Aorta (tissue), 5 donors: ENCODE measurements at regions of chr1 and their contacts with region 1.

Region 1: GRCh38 chr1:180631766-180632325 is at the start of gene XPR1:
- DNase-seq: peak; percentile 98 to 99
- ATAC-seq: peak; percentile 99
- H3K4me3 ChIP-seq: peak within 1 kb of the TSS; percentile 73 to 91
- H3K27ac ChIP-seq: peak within 1 kb of the TSS; percentile 31 to 60
- H3K4me1 ChIP-seq: no peaks in the 10 kb centered on the region
- H3K27me3 ChIP-seq: no peaks in the 10 kb centered on the region
- total RNA-seq, gene XPR1: 23.8 to 55.4 TPM

Region 2: DNA sequence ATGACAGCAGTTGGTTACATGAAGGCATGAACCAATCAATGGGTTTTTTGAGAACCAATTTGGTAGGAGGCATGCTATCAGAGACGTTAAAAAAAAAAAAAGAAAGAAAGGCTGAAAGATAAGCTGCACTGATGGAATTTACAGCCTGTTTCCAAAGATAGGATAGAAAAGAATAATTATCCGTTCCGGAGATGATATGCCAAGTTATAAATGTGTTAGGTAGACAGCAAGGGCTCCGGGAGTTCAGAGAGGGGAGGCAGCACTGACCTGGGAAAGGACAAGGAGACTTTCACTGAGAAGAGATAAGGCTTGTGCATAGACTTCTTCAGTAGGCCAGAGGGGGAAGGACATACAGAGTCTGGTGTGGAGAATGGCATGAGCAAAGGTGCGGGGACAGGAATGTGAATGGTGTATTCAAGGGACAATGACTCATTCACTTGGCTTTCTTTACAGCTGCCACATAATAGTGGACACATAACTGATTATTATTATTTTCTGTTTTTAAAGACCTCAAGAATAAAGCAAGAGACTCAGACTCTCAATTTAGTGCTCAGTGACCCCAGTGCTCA is 104.7 kb before region 1 on chr1:
- intact Hi-C with region 1: loop called in 1 of 2 experiments (anchors 1 kb)
- DNase-seq: no peak
- ATAC-seq: no peak
- H3K4me3 ChIP-seq: no peak overlapping the region
- H3K27ac ChIP-seq: peak overlapping the region; percentile 11 to 66
- H3K4me1 ChIP-seq: peaks cover 6 to 8% of the 10 kb centered on the region in 2 donors
- H3K27me3 ChIP-seq: no peaks in the 10 kb centered on the region

Region 3: GRCh38 chr1:180540697-180541594 is 90.9 kb before region 1 on chr1:
- intact Hi-C with region 1: loop called in 1 of 2 experiments (anchors 5 kb)
- DNase-seq: peak; percentile 67 to 86
- ATAC-seq: no peak
- H3K4me3 ChIP-seq: no peak overlapping the region
- H3K27ac ChIP-seq: peak overlapping the region; percentile 86 to 93
- H3K4me1 ChIP-seq: peaks cover 0 to 14% of the 10 kb centered on the region in 2 donors
- H3K27me3 ChIP-seq: no peaks in the 10 kb centered on the region

Region 4: GRCh38 chr1:180778782-180779398 is 147.0 kb after region 1 on chr1:
- intact Hi-C with region 1: loop called in 1 of 2 experiments (anchors 5 kb)
- DNase-seq: no peak
- ATAC-seq: no peak
- H3K4me3 ChIP-seq: no peak overlapping the region
- H3K27ac ChIP-seq: no peak overlapping the region
- H3K4me1 ChIP-seq: no peaks in the 10 kb centered on the region
- H3K27me3 ChIP-seq: no peaks in the 10 kb centered on the region

Region 5: DNA sequence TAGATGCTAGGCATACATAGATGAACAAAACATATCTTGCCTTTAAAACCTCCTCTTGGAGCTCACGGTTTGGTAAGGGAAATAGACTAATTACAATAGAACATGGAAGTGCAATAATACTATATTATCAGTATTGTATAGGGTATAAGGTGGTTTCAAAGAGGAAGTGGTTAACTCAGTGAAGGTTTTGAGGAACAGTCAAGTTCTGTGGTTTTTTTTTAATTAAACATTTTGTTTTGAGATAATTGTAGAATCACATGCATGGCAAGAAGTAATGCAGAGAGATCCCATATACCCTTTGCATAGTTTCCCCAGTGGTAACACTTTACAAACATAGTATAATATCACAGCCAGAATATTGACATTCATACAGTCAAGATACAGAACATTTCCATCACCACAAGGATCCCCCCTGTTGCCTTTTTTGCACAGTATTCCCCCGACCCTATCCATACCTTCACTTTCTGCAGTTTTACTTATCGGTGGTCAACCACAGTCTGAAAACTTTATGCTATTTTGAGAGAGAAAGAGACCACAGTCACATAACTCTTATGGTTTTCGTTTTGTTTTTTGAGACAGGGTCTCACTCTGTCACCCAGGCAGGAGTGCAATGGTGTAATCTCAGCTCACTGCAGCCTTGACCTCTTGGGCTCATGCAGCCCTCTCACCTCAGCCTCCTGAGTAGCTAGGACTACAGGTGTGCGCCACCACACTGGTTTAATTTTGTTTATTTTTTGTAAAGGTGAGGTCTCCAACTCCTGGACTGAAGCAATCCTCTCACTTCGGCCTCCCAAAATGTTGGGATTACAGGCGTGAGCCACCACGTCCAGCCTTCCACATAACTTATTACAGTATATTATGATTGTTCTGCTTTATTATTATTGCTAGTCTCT is 220.4 kb after region 1 on chr1:
- intact Hi-C with region 1: loop called in 1 of 2 experiments (anchors 10 kb)
- DNase-seq: no peak
- ATAC-seq: no peak
- H3K4me3 ChIP-seq: no peak overlapping the region
- H3K27ac ChIP-seq: no peak overlapping the region
- H3K4me1 ChIP-seq: no peaks in the 10 kb centered on the region
- H3K27me3 ChIP-seq: no peaks in the 10 kb centered on the region

Region 6: GRCh38 chr1:180863158-180863775 is 231.4 kb after region 1 on chr1:
- intact Hi-C with region 1: loop called (anchors 5 to 10 kb)
- DNase-seq: no peak
- ATAC-seq: no peak
- H3K4me3 ChIP-seq: no peak overlapping the region
- H3K27ac ChIP-seq: no peak overlapping the region
- H3K4me1 ChIP-seq: no peaks in the 10 kb centered on the region
- H3K27me3 ChIP-seq: no peaks in the 10 kb centered on the region